Naive thymus-derived CD8-positive, alpha-beta T cell (primary cell): ENCODE measurements at regions of chr16 and their contacts with region 1.

Region 1: DNA sequence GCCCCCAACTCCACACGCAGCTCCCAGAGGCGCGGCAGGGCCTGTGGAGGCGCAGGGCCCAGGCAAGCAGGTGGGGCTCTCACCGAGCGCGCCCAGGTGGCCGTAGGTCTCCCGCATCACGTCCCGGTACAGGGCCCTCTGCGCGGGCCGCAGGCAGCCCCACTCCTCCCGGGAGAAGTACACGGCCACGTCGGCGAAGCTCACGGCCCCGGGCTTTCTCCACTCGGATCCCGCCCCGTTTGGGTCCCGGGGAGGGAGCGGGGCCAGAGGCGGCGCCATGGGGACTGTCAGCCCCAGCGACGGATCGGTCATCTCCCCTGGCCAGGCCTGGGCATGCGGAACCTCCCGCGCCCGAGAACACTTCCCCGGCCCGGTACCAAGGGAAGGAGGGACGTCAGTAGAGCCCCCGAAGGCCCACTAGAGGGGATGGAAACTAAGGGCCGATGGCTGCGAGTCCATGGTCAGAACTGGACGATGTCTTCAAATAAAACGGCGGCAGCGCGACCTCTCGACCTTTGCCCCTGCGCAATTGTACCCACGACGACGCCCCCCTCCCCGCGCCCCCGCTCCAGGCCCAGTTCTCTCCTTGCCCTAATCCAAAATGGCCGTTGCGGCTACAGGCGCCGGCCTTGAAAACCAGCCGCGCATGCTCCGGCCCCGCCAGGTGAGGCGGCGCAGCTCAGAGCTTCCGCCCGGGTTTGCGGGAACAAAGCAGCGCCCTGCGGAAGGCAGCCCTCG is at the start of gene ZNF747:
- DNase-seq: peak; percentile 87 to 95 (median 90)
- ATAC-seq: peak; percentile 82 to 83
- H3K4me3 Mint-ChIP-seq: peak within 1 kb of the TSS; percentile 90 to 99 (median 95)
- H3K27ac Mint-ChIP-seq: peak within 1 kb of the TSS; percentile 87 to 100 (median 98)
- H3K4me1 Mint-ChIP-seq: peaks cover 12 to 49% (median 36%) of the 10 kb centered on the region in 4 donors
- H3K27me3 Mint-ChIP-seq: no peaks in the 10 kb centered on the region
- polyA plus RNA-seq, gene ZNF747: 9.5 to 12.0 (median 11.4) TPM

Region 2: GRCh38 chr16:30445408-30446202 is 88.9 kb before region 1 on chr16 and contains the start of gene SEPHS2:
- POLR2A ChIA-PET with region 1: interaction called, 21 read pairs
- DNase-seq: peak; percentile 83 to 99 (median 94)
- ATAC-seq: peak; percentile 97
- H3K4me3 Mint-ChIP-seq: peak within 1 kb of the TSS; percentile 86 to 98 (median 96)
- H3K27ac Mint-ChIP-seq: peak within 1 kb of the TSS; percentile 95 to 99 (median 97)
- H3K4me1 Mint-ChIP-seq: peaks cover 13 to 49% (median 43%) of the 10 kb centered on the region in 4 donors
- H3K27me3 Mint-ChIP-seq: no peaks in the 10 kb centered on the region
- polyA plus RNA-seq, gene SEPHS2: 45.5 to 60.7 (median 55.0) TPM

Region 3: GRCh38 chr16:30551781-30552180 is 17.2 kb after region 1 on chr16:
- POLR2A ChIA-PET with region 1: interaction called, 105 read pairs
- DNase-seq: peak in 9 of 10 donors; percentile 32 to 70 (median 54)
- ATAC-seq: peak; percentile 86 to 90
- H3K4me3 Mint-ChIP-seq: peak overlapping the region; percentile 46 to 85 (median 74)
- H3K27ac Mint-ChIP-seq: peak overlapping the region; percentile 57 to 96 (median 93)
- H3K4me1 Mint-ChIP-seq: peaks cover 18 to 55% (median 51%) of the 10 kb centered on the region in 4 donors
- H3K27me3 Mint-ChIP-seq: no peaks in the 10 kb centered on the region

Region 4: GRCh38 chr16:30585400-30586189 is 51.1 kb after region 1 on chr16 and contains the start of gene ZNF785:
- POLR2A ChIA-PET with region 1: interaction called, 14 read pairs
- DNase-seq: peak; percentile 75 to 97 (median 92)
- ATAC-seq: peak; percentile 99 to 100
- H3K4me3 Mint-ChIP-seq: peak within 1 kb of the TSS; percentile 82 to 96 (median 90)
- H3K27ac Mint-ChIP-seq: peak within 1 kb of the TSS; percentile 83 to 95 (median 92)
- H3K4me1 Mint-ChIP-seq: peaks cover 9 to 48% (median 28%) of the 10 kb centered on the region in 4 donors
- H3K27me3 Mint-ChIP-seq: peaks cover 0 to 1% (median 0%) of the 10 kb centered on the region in 5 donors
- polyA plus RNA-seq, gene ZNF785: 1.6 to 3.5 (median 3.4) TPM

Region 5: GRCh38 chr16:30657866-30658730 is 123.6 kb after region 1 on chr16 and contains the start of gene FBRS:
- POLR2A ChIA-PET with region 1: interaction called, 12 read pairs
- DNase-seq: peak in 9 of 10 donors; percentile 99 to 100 (median 100)
- ATAC-seq: peak; percentile 66 to 72
- H3K4me3 Mint-ChIP-seq: peak within 1 kb of the TSS; percentile 90 to 99 (median 94)
- H3K27ac Mint-ChIP-seq: peak within 1 kb of the TSS; percentile 99 to 100 (median 100)
- H3K4me1 Mint-ChIP-seq: peaks cover 20 to 46% (median 42%) of the 10 kb centered on the region in 4 donors
- H3K27me3 Mint-ChIP-seq: no peaks in the 10 kb centered on the region
- polyA plus RNA-seq, gene FBRS: 3.2 to 8.0 (median 4.4) TPM